B cell (primary cell): ENCODE measurements at regions of chr10 and their contacts with region 1.

Region 1: DNA sequence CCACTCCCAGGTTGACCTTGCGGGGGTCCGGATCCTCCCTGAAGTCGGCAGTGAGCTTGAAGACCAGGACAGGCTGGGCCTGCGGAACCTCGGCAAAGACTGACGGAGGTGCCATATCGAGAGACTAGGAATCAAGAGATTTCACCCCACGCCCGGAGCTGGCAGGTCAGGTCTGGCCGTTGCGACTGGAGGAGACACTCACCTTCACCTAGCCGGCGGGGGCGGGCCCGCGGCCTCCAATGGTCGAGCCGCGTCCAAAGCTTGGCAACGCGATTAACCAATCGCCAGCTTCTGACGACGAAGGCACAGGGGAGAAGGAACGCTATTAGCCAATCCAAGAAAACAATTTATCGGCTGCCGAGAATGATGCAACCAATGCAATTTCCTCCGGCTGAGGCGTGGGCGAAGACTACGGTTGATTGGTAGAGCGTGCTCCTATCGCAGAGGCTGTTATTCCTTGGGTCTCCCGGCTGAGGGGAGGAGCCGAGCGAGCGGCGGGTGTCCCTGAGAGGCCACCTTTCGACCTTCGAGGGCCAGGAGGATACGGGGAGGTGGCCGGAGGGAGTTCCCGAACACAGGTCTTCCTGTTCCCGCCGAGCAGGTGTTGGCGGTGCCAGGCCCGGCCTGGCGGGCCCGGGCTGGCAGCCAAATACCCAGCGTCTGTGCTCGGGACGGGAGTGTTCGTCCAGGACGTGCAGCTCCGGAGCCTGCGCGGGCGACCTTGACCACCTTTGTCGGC is at the start of gene GOT1:
- DNase-seq: peak; percentile 97
- ATAC-seq: peak; percentile 89
- H3K4me3 ChIP-seq: peak within 1 kb of the TSS; percentile 72 to 87 (median 76)
- H3K4me3 Mint-ChIP-seq: peak within 1 kb of the TSS; percentile 99
- H3K27ac ChIP-seq: peak within 1 kb of the TSS; percentile 81 to 85
- H3K27ac Mint-ChIP-seq: peak within 1 kb of the TSS; percentile 96
- H3K4me1 ChIP-seq: peaks cover 13 to 21% of the 10 kb centered on the region in 2 donors
- H3K4me1 Mint-ChIP-seq: peaks cover 28% of the 10 kb centered on the region
- H3K27me3 ChIP-seq: no peaks in the 10 kb centered on the region
- H3K27me3 Mint-ChIP-seq: no peaks in the 10 kb centered on the region
- CTCF ChIP-seq: no peak
- total RNA-seq, gene GOT1: 13.8 and 14.9 TPM in 2 replicates

Region 2: DNA sequence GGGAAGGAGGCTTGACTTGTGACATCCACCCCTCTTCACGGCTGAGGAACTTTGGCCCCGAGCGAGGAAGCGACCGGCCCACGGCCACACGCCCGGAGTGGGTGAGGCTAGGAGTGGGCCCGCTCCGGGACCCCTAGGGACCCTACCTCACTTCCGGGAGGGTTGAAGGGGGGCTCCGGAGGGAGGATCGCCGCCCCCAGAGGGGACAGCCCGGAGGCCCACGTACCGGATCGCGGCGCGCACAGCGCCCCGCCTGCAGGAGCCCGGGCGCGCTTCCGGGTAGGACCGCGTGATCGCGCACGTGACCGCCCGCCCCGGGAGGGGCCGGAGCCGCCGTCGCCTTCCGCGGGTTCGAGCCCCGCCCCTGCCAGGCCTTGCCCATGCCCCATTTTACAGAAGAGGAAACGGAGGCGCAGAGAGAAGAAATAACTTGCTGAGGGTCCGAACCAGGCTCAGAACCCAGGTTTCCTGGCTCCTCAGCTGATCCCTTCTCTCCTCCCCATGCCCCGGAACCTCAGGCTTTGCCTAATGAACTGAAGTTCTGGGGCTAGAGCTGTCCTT is 983.9 kb before region 1 on chr10 and contains the start of gene HPS1:
- CTCF ChIA-PET with region 1: no interaction called
- POLR2A ChIA-PET with region 1: no interaction called
- intact Hi-C with region 1: loop called (anchors 1 kb)
- DNase-seq: peak; percentile 92
- ATAC-seq: peak; percentile 85
- H3K4me3 ChIP-seq: peak within 1 kb of the TSS; percentile 55 to 88 (median 82)
- H3K4me3 Mint-ChIP-seq: peak within 1 kb of the TSS; percentile 90
- H3K27ac ChIP-seq: peak within 1 kb of the TSS; percentile 94 to 97
- H3K27ac Mint-ChIP-seq: peak within 1 kb of the TSS; percentile 95
- H3K4me1 ChIP-seq: peaks cover 28 to 39% of the 10 kb centered on the region in 2 donors
- H3K4me1 Mint-ChIP-seq: peaks cover 49% of the 10 kb centered on the region
- H3K27me3 ChIP-seq: no peaks in the 10 kb centered on the region
- H3K27me3 Mint-ChIP-seq: no peaks in the 10 kb centered on the region
- CTCF ChIP-seq: no peak
- total RNA-seq, gene HPS1: 125 TPM in 2 replicates

Region 3: GRCh38 chr10:99141022-99141422 is 289.6 kb before region 1 on chr10:
- CTCF ChIA-PET with region 1: no interaction called
- POLR2A ChIA-PET with region 1: no interaction called
- intact Hi-C with region 1: no loop called
- DNase-seq: no peak
- ATAC-seq: no peak
- H3K4me3 ChIP-seq: no peak overlapping the region
- H3K4me3 Mint-ChIP-seq: no peak overlapping the region
- H3K27ac ChIP-seq: no peak overlapping the region
- H3K27ac Mint-ChIP-seq: no peak overlapping the region
- H3K4me1 ChIP-seq: no peaks in the 10 kb centered on the region
- H3K4me1 Mint-ChIP-seq: no peaks in the 10 kb centered on the region
- H3K27me3 ChIP-seq: no peaks in the 10 kb centered on the region
- H3K27me3 Mint-ChIP-seq: peaks cover 15% of the 10 kb centered on the region
- CTCF ChIP-seq: no peak

Region 4: GRCh38 chr10:99659031-99659867 is 228.6 kb after region 1 on chr10 and contains the start of gene ENTPD7:
- CTCF ChIA-PET with region 1: interaction called, 9 read pairs
- POLR2A ChIA-PET with region 1: no interaction called
- intact Hi-C with region 1: loop called (anchors 1 kb)
- DNase-seq: peak; percentile 91
- ATAC-seq: peak; percentile 99
- H3K4me3 ChIP-seq: peak within 1 kb of the TSS; percentile 63 to 89 (median 82)
- H3K4me3 Mint-ChIP-seq: peak within 1 kb of the TSS; percentile 84
- H3K27ac ChIP-seq: peak within 1 kb of the TSS in 1 of 2 donors; percentile 64
- H3K27ac Mint-ChIP-seq: peak within 1 kb of the TSS; percentile 32
- H3K4me1 ChIP-seq: peaks cover 7 to 16% of the 10 kb centered on the region in 2 donors
- H3K4me1 Mint-ChIP-seq: peaks cover 19% of the 10 kb centered on the region
- H3K27me3 ChIP-seq: peaks cover 0 to 4% (median 0%) of the 10 kb centered on the region in 4 experiments
- H3K27me3 Mint-ChIP-seq: peaks cover 9% of the 10 kb centered on the region
- CTCF ChIP-seq: peak; percentile 19
- total RNA-seq, gene ENTPD7: 6.0 and 6.2 TPM in 2 replicates

Region 5: GRCh38 chr10:99732033-99732912 is 301.7 kb after region 1 on chr10 and contains the starts of genes COX15 and CUTC:
- CTCF ChIA-PET with region 1: no interaction called
- POLR2A ChIA-PET with region 1: no interaction called
- intact Hi-C with region 1: loop called (anchors 1 kb)
- DNase-seq: peak; percentile 95
- ATAC-seq: peak; percentile 93
- H3K4me3 ChIP-seq: peak within 1 kb of the TSS; percentile 84 to 99 (median 93)
- H3K4me3 Mint-ChIP-seq: peak within 1 kb of the TSS; percentile 95
- H3K27ac ChIP-seq: peak within 1 kb of the TSS; percentile 82 to 83
- H3K27ac Mint-ChIP-seq: peak within 1 kb of the TSS; percentile 99
- H3K4me1 ChIP-seq: peaks cover 13 to 24% of the 10 kb centered on the region in 2 donors
- H3K4me1 Mint-ChIP-seq: peaks cover 32% of the 10 kb centered on the region
- H3K27me3 ChIP-seq: no peaks in the 10 kb centered on the region
- H3K27me3 Mint-ChIP-seq: no peaks in the 10 kb centered on the region
- CTCF ChIP-seq: peak; percentile 64
- total RNA-seq, gene COX15: 39.5 and 47.4 TPM in 2 replicates
- total RNA-seq, gene CUTC: 32.0 and 33.3 TPM in 2 replicates